Spleen (tissue), 13 donors: ENCODE measurements at regions of chr15 and their contacts with region 1.

Region 1: DNA sequence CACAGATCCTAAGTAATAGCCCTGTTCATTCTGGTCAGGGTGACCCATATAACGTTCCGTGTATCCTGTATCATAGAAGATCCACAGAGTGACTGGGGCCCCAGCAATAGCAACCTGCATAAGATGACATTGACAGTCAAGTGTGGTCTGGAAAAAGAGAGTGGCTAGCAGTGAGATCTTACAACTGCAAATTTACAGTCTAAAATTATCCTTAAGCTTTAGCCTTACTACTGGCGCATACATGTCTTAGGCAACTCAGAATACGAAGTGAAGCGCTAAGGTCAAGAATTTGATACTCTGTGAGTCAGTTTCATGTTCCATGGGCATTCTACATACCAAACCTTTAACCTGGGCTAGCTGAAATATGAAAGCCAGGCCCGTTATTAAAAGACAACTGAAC is 29.2 kb upstream of the IGDCC4 start:
- DNase-seq: no peak
- H3K4me3 ChIP-seq: no peak overlapping the region
- H3K27ac ChIP-seq: no peak overlapping the region
- H3K4me1 ChIP-seq: no peaks in the 10 kb centered on the region
- H3K27me3 ChIP-seq: no peaks in the 10 kb centered on the region
- CTCF ChIP-seq: no peak
- POLR2A ChIP-seq: no peak

Region 2: DNA sequence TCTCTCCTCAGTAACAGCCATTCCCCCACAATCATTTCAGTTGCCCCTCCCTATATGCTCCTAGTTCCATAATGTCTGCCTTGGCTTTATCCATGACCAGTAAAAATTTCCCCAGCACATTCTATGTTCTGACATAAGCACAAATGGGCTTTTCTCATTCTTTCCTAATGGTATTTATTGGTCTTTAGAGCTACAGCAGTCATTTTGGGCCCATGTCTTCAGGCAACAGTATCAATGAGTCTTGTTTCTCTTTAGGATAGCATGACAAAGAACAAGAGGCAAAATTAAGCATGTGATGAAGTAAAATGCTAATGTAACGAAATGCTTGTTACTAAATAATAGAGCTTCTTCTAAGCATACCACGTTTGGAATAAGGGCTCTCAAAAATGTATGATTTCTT is 57.3 kb after region 1 on chr15:
- intact Hi-C with region 1: loop called (anchors 10 kb)
- DNase-seq: no peak
- H3K4me3 ChIP-seq: no peak overlapping the region
- H3K27ac ChIP-seq: no peak overlapping the region
- H3K4me1 ChIP-seq: peaks cover 6 to 53% (median 32%) of the 10 kb centered on the region in 6 donors
- H3K27me3 ChIP-seq: no peaks in the 10 kb centered on the region
- CTCF ChIP-seq: no peak
- POLR2A ChIP-seq: no peak

Region 3: GRCh38 chr15:65541231-65541820 is 89.3 kb after region 1 on chr15:
- intact Hi-C with region 1: no loop called
- DNase-seq: no peak
- H3K4me3 ChIP-seq: no peak overlapping the region
- H3K27ac ChIP-seq: no peak overlapping the region
- H3K4me1 ChIP-seq: no peaks in the 10 kb centered on the region
- H3K27me3 ChIP-seq: no peaks in the 10 kb centered on the region
- CTCF ChIP-seq: no peak
- POLR2A ChIP-seq: no peak